Caco-2 (cell line): ENCODE measurements at regions of chr6 and their contacts with region 1.

Region 1: DNA sequence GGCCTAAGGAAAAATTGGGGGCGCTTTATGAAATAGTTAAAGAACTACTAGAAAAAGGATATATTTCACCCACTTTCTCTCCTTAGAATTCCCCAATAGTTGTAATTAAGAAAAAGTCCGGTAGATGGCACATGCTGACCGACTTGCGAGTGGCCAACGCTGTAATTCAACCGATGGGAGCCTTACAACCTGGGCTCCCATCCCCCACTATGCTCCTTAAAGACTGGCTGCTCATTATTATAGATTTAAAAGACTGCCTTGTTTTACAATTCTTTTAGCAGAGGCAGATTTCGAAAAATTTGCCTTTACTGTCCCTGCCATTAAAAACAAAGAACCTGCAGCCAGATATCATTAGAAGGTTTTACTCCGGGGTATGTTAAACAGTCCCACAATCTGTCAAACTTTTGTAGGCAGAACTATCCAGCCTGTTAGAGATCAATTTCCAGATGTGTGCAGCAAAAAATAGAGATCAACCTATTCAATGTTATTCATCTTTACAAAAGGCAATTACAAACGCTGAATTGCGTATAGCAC is 58.5 kb upstream of the PRSS16 start:
- DNase-seq: peak; percentile 59 to 82
- H3K4me3 ChIP-seq: peak overlapping the region; percentile 74
- H3K4me3 Mint-ChIP-seq: peak overlapping the region; percentile 98
- H3K27ac Mint-ChIP-seq: peak overlapping the region; percentile 98
- H3K4me1 ChIP-seq: peaks cover 16% of the 10 kb centered on the region
- H3K4me1 Mint-ChIP-seq: no peaks in the 10 kb centered on the region
- H3K27me3 ChIP-seq: no peaks in the 10 kb centered on the region
- H3K27me3 Mint-ChIP-seq: no peaks in the 10 kb centered on the region
- CTCF ChIP-seq: peak; percentile 54 to 86

Region 2: DNA sequence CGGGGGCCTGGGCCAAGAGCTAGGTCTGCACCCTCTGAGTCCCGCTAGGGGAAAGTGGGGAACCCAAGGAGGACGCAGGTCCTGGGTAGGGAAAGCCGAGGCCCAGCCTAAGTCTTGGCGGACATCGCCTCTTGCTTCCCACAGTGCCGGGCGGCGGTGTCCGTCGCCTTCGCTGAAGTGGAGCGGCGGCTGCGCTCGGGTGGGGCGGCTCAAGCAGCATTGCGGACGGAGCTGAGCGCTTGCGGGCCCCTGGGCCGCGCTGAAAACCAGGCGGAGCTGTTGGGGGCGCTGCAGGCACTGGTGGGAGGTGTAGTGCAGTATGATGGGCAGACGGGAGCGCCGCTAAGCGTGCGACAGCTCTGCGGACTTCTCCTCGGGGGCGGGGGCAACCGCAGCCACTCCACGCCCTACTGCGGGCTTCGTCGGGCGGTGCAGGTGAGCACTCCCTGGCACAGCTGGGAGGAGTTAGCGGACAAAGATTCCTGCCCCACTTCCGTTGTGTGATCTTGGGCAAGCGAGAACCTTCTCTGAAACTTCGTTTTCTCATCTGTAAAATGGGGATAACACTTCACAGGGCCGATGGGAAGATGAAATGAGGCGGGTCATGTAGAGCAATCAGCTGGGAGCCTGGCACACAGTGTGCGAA is 62.8 kb after region 1 on chr6:
- CTCF ChIA-PET with region 1: no interaction called
- POLR2A ChIA-PET with region 1: interaction called, 5 read pairs
- intact Hi-C with region 1: loop called (anchors 1 kb)
- DNase-seq: peak; percentile 94
- H3K4me3 ChIP-seq: peak overlapping the region; percentile 84
- H3K4me3 Mint-ChIP-seq: peak overlapping the region; percentile 97
- H3K27ac Mint-ChIP-seq: peak overlapping the region; percentile 93
- H3K4me1 ChIP-seq: peaks cover 7% of the 10 kb centered on the region; the same call in 1 of the 2 replicates
- H3K4me1 Mint-ChIP-seq: peaks cover 13% of the 10 kb centered on the region
- H3K27me3 ChIP-seq: no peaks in the 10 kb centered on the region
- H3K27me3 Mint-ChIP-seq: no peaks in the 10 kb centered on the region
- CTCF ChIP-seq: peak; percentile 52 to 77

Region 3: GRCh38 chr6:27388293-27389197 is 199.6 kb after region 1 on chr6 and contains the start of gene ZNF391:
- CTCF ChIA-PET with region 1: interaction called, 5 read pairs
- POLR2A ChIA-PET with region 1: no interaction called
- intact Hi-C with region 1: loop called (anchors 5 kb)
- DNase-seq: peak; percentile 83 to 88
- H3K4me3 ChIP-seq: peak within 1 kb of the TSS; percentile 75
- H3K4me3 Mint-ChIP-seq: peak within 1 kb of the TSS; percentile 92
- H3K27ac Mint-ChIP-seq: peak within 1 kb of the TSS; percentile 92
- H3K4me1 ChIP-seq: peaks cover 3% of the 10 kb centered on the region; the same call in 1 of the 2 replicates
- H3K4me1 Mint-ChIP-seq: peaks cover 6% of the 10 kb centered on the region
- H3K27me3 ChIP-seq: no peaks in the 10 kb centered on the region
- H3K27me3 Mint-ChIP-seq: no peaks in the 10 kb centered on the region
- CTCF ChIP-seq: no peak
- total RNA-seq, gene ZNF391: 5.0 TPM in 2 replicates

Region 4: DNA sequence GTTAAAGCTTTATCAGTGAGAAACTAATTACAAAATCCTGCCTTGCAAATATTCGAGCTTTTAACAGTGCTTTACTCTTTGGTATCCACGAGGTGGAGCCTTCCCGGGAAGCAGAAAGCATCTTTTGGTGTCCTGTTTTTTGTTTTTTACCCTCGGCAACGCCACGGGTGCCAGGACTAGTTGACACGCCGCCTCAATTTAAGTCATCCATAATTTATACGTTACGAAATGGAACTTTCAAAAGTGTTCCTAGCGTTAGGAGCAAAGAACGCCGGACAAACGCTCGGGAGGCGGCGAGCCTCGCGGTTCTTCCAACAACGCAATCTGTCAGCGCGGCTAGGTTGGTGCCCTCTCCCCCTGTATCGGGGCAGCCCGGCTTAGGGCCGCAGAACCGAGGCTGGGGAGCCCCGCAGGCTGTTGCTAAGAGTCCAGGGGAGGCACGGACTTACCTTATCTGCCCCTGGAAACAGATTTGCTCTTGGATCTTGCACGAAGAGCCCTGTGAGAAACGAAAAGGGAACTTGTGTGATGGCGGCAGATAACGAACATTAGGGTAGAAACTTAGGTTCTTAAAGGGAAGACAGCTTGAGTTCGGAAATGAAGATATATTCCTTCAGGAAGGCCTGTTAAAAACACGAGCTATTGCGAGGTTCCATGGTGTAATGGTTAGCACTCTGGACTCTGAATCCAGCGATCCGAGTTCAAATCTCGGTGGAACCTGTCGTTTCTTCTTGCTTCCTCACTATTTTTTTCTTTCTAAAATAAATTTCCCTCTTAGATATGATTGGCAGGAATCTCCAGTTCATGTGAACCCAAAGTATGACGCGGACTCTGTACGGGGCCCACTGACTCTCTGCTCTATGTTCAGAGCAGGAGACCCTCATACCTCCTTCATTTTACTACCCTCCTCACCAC is 330.2 kb after region 1 on chr6:
- CTCF ChIA-PET with region 1: no interaction called
- POLR2A ChIA-PET with region 1: no interaction called
- intact Hi-C with region 1: loop called (anchors 1 kb)
- DNase-seq: peak; percentile 58 to 77
- H3K4me3 ChIP-seq: peak overlapping the region; percentile 81
- H3K4me3 Mint-ChIP-seq: peak overlapping the region; percentile 85
- H3K27ac Mint-ChIP-seq: peak overlapping the region; percentile 94
- H3K4me1 ChIP-seq: no peaks in the 10 kb centered on the region
- H3K4me1 Mint-ChIP-seq: no peaks in the 10 kb centered on the region
- H3K27me3 ChIP-seq: no peaks in the 10 kb centered on the region
- H3K27me3 Mint-ChIP-seq: no peaks in the 10 kb centered on the region
- CTCF ChIP-seq: peak; percentile 62 to 71

Region 5: DNA sequence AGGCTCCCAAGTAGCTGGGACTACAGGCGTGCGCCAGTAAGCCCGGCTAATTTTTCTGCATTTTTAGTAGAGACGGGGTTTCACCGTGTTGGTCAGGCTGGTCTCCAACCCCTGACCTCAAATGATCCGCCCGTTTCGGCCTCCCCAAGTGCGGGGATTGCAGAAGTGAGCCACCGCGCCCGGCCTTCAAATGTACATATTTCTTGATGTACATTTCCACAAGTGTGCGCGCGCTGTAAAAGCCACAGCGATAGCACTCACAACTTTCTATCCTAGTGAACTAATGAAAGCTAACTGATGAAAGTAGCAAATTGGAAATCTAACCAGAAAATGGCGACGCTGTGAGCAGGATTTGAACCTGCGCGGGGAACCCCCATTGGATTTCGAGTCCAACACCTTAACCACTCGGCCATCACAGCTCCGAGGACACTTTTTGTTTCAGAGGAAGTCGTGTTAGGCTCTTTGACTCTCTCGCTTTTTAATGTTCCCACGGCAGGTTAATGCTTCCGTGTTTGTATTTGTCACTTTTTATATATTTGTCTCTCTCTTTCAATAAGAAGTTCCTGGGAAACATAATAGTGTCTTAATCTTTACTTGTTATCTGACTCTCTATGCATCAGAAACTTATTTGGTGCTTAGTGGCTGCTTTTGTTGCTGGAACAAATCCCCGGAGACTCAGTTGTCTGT is 483.3 kb after region 1 on chr6:
- CTCF ChIA-PET with region 1: no interaction called
- POLR2A ChIA-PET with region 1: no interaction called
- intact Hi-C with region 1: loop called (anchors 5 kb)
- DNase-seq: peak; percentile 79 to 87
- H3K4me3 ChIP-seq: peak overlapping the region; percentile 18
- H3K4me3 Mint-ChIP-seq: peak overlapping the region; percentile 75
- H3K27ac Mint-ChIP-seq: peak overlapping the region; percentile 46
- H3K4me1 ChIP-seq: peaks cover 4% of the 10 kb centered on the region; the same call in 1 of the 2 replicates
- H3K4me1 Mint-ChIP-seq: peaks cover 30% of the 10 kb centered on the region
- H3K27me3 ChIP-seq: no peaks in the 10 kb centered on the region
- H3K27me3 Mint-ChIP-seq: no peaks in the 10 kb centered on the region
- CTCF ChIP-seq: no peak

Region 6: GRCh38 chr6:27753668-27754407 is 564.9 kb after region 1 on chr6:
- CTCF ChIA-PET with region 1: interaction called, 5 read pairs
- POLR2A ChIA-PET with region 1: no interaction called
- intact Hi-C with region 1: loop called (anchors 1 kb)
- DNase-seq: peak; percentile 81 to 90
- H3K4me3 ChIP-seq: peak overlapping the region; percentile 47
- H3K4me3 Mint-ChIP-seq: peak overlapping the region; percentile 74
- H3K27ac Mint-ChIP-seq: peak overlapping the region; percentile 83
- H3K4me1 ChIP-seq: no peaks in the 10 kb centered on the region
- H3K4me1 Mint-ChIP-seq: peaks cover 16% of the 10 kb centered on the region
- H3K27me3 ChIP-seq: no peaks in the 10 kb centered on the region
- H3K27me3 Mint-ChIP-seq: no peaks in the 10 kb centered on the region
- CTCF ChIP-seq: peak in 1 of 2 experiments; percentile 13